ENCODE measurements at regions of chrX and their contacts with region 1.

Region 1: DNA sequence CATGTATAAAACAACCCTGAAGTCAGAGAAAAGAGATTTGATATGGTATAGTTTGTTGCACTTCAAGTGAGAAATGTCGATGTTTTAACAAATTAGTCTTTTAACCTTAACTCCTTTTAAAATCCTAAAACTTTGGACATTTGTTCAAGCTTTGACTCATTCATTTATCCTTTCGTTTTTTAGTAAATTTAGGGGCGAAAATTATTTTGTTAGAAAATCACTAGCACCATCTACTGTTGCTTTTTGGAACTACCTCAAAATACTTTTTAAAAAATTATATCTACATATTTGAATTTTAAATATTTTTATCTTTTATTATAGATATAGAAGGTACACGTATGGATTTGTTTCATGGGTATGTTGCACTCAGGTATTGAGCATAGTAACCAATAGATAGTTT is 165.1 kb upstream of the POF1B start:
- DNase-seq: peak; percentile 2
- ATAC-seq: no peak
- H3K4me3 ChIP-seq: no peak overlapping the region
- H3K4me3 Mint-ChIP-seq: no peak overlapping the region
- H3K27ac ChIP-seq: no peak overlapping the region
- H3K27ac Mint-ChIP-seq: no peak overlapping the region
- H3K4me1 ChIP-seq: no peaks in the 10 kb centered on the region
- H3K4me1 Mint-ChIP-seq: no peaks in the 10 kb centered on the region
- H3K27me3 ChIP-seq: no peaks in the 10 kb centered on the region
- H3K27me3 Mint-ChIP-seq: no peaks in the 10 kb centered on the region
- CTCF ChIP-seq: peak; percentile 67

Region 2: GRCh38 chrX:85084770-85085393 is 459.7 kb before region 1 on chrX:
- CTCF ChIA-PET with region 1: interaction called, 7 read pairs
- POLR2A ChIA-PET with region 1: no interaction called
- intact Hi-C with region 1: loop called (anchors 1 kb)
- DNase-seq: peak; percentile 27
- ATAC-seq: no peak
- H3K4me3 ChIP-seq: no peak overlapping the region
- H3K4me3 Mint-ChIP-seq: no peak overlapping the region
- H3K27ac ChIP-seq: no peak overlapping the region
- H3K27ac Mint-ChIP-seq: no peak overlapping the region
- H3K4me1 ChIP-seq: no peaks in the 10 kb centered on the region
- H3K4me1 Mint-ChIP-seq: no peaks in the 10 kb centered on the region
- H3K27me3 ChIP-seq: no peaks in the 10 kb centered on the region
- H3K27me3 Mint-ChIP-seq: no peaks in the 10 kb centered on the region
- CTCF ChIP-seq: peak; percentile 74

Region 3: DNA sequence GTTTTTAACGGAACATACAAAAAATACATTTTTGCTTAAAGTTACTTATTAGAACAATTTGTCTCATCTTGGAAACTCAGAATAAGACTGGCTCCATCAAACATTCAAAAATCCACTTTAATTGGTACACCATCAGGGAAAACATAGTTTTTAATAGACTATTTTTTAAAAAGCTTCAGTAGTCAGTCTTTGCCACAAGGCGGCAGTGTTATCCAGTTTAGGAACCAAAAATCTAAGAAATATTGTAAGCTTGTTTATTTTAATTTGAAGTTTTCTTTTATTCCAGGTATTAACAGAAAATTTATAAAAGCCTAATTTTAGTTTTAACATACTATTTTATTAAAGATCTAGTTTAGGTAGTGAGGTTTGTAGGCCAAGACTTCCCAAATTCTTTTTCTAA is 433.3 kb before region 1 on chrX:
- CTCF ChIA-PET with region 1: interaction called, 19 read pairs
- POLR2A ChIA-PET with region 1: no interaction called
- intact Hi-C with region 1: loop called (anchors 1 kb)
- DNase-seq: peak; percentile 10
- ATAC-seq: no peak
- H3K4me3 ChIP-seq: no peak overlapping the region
- H3K4me3 Mint-ChIP-seq: no peak overlapping the region
- H3K27ac ChIP-seq: no peak overlapping the region
- H3K27ac Mint-ChIP-seq: no peak overlapping the region
- H3K4me1 ChIP-seq: no peaks in the 10 kb centered on the region
- H3K4me1 Mint-ChIP-seq: no peaks in the 10 kb centered on the region
- H3K27me3 ChIP-seq: no peaks in the 10 kb centered on the region
- H3K27me3 Mint-ChIP-seq: no peaks in the 10 kb centered on the region
- CTCF ChIP-seq: peak; percentile 72

Region 4: GRCh38 chrX:85897362-85898126 is 352.9 kb after region 1 on chrX:
- CTCF ChIA-PET with region 1: no interaction called
- POLR2A ChIA-PET with region 1: no interaction called
- intact Hi-C with region 1: no loop called
- DNase-seq: no peak
- ATAC-seq: no peak
- H3K4me3 ChIP-seq: no peak overlapping the region
- H3K4me3 Mint-ChIP-seq: no peak overlapping the region
- H3K27ac ChIP-seq: no peak overlapping the region
- H3K27ac Mint-ChIP-seq: no peak overlapping the region
- H3K4me1 ChIP-seq: no peaks in the 10 kb centered on the region
- H3K4me1 Mint-ChIP-seq: peaks cover 2% of the 10 kb centered on the region
- H3K27me3 ChIP-seq: no peaks in the 10 kb centered on the region
- H3K27me3 Mint-ChIP-seq: no peaks in the 10 kb centered on the region
- CTCF ChIP-seq: no peak

Measured in B cell (primary cell).